Dendritic cell treated with granulocyte-macrophage colony-stimulating factor and Interleukin-4, amounts not matched to agents 40 ng/mL and 50 ng/mL, for 4 days (primary cell): ENCODE measurements at regions of chr4 and their contacts with region 1.

Region 1: DNA sequence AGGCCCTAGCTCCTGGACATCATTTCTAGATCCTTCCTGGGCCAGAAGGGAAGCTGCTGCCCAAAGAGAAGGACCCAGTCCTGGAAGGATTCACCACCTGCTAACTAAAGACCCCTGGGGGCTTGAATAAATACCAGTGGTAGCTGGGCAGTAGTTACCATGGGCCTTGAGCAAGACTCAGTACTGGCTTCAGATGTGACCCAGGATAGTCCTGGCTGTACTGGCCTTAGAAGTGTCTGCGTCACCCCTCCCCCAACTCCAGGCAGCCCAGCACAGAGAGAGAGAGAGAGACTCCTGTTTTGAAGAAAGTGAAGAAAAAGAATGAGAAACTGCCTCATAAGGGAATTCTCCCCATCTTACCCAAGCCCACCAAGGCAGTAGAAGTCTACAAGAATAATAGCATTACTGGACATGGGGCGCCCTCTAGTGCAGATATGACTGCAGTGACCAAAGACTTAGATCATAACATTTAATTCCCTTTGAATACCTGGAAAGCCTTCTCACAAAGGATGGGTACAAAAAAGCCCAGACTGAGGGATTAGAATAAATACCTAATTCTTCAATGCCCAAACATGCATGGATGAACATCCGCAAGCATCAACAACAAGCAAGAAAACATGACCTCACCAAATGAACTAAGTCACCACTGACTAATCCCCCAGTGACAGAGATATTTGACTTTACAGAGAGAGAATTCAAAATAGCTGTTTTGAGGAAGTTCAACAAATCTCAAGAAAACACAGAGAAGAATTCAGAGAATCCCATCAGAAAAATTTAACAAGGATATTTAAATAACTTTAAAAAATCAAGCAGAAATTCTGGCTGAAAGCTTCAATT is 171.8 kb downstream of the HNRNPD start:
- H3K4me3 Mint-ChIP-seq: no peak overlapping the region
- H3K27ac Mint-ChIP-seq: no peak overlapping the region
- H3K4me1 Mint-ChIP-seq: peaks cover 10% of the 10 kb centered on the region
- H3K27me3 Mint-ChIP-seq: no peaks in the 10 kb centered on the region

Region 2: DNA sequence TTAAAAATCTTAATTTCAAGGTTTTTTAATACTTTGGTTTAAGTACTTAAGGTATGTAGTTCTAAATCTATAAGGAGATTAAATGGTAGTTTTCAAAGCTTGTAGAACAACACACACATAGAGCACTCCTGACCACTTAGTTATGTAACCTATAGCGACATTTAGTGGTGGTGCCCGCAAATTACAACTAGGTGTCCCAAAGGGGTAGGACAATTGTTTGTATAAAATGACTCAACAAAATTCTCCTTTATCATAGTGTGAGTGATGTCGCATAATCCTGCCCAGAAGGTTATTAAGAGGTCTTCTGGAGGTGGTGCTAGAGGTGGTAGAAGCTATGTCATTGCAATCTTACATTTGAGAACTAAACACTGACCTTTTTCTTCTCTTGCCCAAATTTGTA is 357.3 kb before region 1 on chr4:
- intact Hi-C with region 1: loop called (anchors 10 kb)
- H3K4me3 Mint-ChIP-seq: no peak overlapping the region
- H3K27ac Mint-ChIP-seq: no peak overlapping the region
- H3K4me1 Mint-ChIP-seq: no peaks in the 10 kb centered on the region
- H3K27me3 Mint-ChIP-seq: no peaks in the 10 kb centered on the region

Region 3: DNA sequence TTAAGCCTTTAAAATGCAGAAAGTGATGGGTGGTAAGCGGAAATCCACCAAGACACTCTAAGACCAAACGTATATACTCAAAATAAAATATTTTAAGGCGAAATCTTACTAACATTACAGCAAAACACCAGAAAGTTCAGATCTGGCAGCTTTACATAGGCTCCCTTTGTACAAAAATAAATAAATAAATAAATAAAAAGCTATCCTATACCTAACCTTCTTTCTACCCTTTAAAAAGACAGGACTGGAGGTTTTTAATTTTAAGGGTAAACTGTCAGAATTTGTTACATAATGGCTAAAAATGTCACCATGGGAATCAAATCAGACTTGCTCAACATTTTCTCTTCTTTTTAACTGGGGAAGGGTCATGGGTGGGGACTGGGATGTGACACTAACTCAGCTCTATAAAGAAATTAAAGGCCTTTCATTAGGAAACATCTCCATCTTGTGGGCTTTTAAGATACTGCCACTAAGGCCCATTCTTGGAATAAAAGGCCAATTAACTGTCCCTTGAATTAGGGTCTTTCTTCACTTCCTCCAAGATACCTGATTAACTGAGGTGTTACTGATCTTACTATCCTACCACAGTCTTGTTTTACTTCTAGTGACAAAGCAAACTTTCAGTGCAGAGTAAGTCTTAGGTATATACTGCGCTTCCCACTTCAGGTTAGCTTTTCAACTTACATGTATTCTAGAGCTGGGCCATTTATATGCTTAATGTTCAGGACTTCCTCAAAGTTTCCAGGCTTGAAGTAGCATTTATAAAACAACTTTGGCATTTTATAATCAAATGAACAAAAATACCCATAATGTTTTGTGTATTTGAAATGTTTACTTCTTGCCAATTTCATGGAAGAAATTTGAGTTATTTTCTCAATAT is 158.5 kb after region 1 on chr4:
- intact Hi-C with region 1: loop called (anchors 10 kb)
- H3K4me3 Mint-ChIP-seq: no peak overlapping the region
- H3K27ac Mint-ChIP-seq: peak overlapping the region; percentile 61
- H3K4me1 Mint-ChIP-seq: peaks cover 53% of the 10 kb centered on the region
- H3K27me3 Mint-ChIP-seq: no peaks in the 10 kb centered on the region